Esophagus muscularis mucosa (tissue), 4 donors: ENCODE measurements at regions of chr17 and their contacts with region 1.

Region 1: DNA sequence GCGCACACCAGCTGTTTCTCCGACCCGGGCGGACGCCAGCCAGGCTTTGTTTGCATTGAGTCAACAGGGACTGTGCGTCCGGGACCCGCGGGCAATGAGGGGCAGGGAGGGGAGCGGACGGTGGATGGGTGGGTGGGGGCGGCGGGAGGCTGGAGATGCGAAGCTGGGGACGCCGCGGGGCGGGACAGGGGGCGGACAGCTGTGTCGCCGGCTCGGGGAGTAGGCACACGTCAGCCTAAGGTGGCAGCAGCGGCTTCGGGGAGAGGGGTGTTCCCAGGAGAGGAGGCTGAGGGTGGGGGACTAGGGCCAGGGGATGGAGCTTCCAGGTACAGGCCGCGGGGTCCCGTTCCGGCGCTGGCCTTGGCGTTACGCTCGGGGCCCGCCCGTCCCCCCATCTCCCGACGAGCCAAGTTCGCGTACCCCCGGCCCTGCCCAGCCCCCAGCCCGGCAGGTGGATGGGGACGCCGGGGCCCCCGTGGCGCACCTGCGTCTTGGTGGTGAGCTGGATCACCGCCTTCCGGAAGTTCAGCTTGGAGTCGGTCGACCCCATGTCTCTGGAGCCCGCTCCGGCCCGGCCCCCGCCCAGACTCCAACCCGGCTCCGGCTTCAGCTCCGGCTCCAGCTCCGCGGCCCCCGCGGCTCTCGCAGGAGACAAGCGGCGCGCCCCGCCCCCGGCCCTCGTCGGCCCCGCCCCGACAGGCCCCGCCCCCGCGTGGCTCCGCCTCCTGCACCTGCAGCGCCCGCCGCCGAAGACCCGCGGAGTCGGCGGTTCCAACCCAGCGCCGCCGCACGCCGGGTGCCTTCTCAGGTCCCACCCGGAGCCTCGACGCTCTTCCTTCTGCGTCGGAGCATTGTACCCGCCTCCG is at the start of gene HID1:
- DNase-seq: no peak
- H3K4me3 ChIP-seq: peak within 1 kb of the TSS; percentile 69 to 88 (median 74)
- H3K27ac ChIP-seq: peak within 1 kb of the TSS; percentile 43 to 71 (median 57)
- H3K4me1 ChIP-seq: peaks cover 14 to 26% (median 20%) of the 10 kb centered on the region in 4 donors
- H3K27me3 ChIP-seq: peaks cover 0 to 37% (median 0%) of the 10 kb centered on the region in 4 donors
- CTCF ChIP-seq: no peak
- EP300 ChIP-seq: no peak
- POLR2A ChIP-seq: no peak
- total RNA-seq, gene HID1: 4.5 to 17.1 (median 10.9) TPM

Region 2: GRCh38 chr17:75006653-75007052 is 34.3 kb after region 1 on chr17:
- intact Hi-C with region 1: loop called (anchors 5 kb)
- DNase-seq: no peak
- H3K4me3 ChIP-seq: no peak overlapping the region
- H3K27ac ChIP-seq: no peak overlapping the region
- H3K4me1 ChIP-seq: peaks cover 7 to 12% (median 11%) of the 10 kb centered on the region in 4 donors
- H3K27me3 ChIP-seq: no peaks in the 10 kb centered on the region
- CTCF ChIP-seq: no peak
- EP300 ChIP-seq: no peak
- POLR2A ChIP-seq: no peak

Region 3: GRCh38 chr17:75034236-75034908 is 62.0 kb after region 1 on chr17:
- intact Hi-C with region 1: loop called (anchors 5 kb)
- DNase-seq: peak; percentile 98
- H3K4me3 ChIP-seq: peak overlapping the region; percentile 67 to 88 (median 76)
- H3K27ac ChIP-seq: peak overlapping the region; percentile 92 to 98 (median 96)
- H3K4me1 ChIP-seq: peaks cover 37 to 52% (median 50%) of the 10 kb centered on the region in 4 donors
- H3K27me3 ChIP-seq: no peaks in the 10 kb centered on the region
- CTCF ChIP-seq: no peak
- EP300 ChIP-seq: no peak
- POLR2A ChIP-seq: peak; percentile 14